Posterior vena cava (tissue), 2 donors: ENCODE measurements at regions of chr9 and their contacts with region 1.

Region 1: DNA sequence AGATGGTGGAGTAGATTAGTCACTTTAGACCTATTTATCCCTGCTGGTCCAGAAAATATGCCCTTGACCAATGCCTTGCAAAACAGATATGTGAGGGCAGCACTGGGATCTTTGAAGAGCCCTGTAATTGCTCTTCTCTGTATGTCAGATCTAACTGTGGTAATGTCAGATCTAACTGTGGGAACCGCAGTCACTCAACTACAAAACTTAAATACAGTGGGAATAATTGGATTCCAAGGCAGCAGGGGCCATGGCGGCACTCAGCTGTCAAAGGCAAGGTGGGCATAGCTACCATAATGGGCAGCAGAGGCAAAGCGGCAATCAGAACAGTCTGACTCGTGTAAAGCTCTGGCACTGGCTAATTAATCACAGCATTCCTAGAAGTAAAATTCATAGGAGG is 46.2 kb downstream of the MTAP start:
- DNase-seq: no peak

Region 2: GRCh38 chr9:21864505-21864904 is 15.9 kb after region 1 on chr9:
- intact Hi-C with region 1: loop called in 1 of 2 experiments (anchors 1 kb)
- DNase-seq: no peak